ENCODE measurements at regions of chr15 and their contacts with region 1.

Region 1: GRCh38 chr15:29680465-29681165 is 141.7 kb downstream of the TJP1 start:
- DNase-seq: peak in 1 of 2 experiments; percentile 25
- H3K4me3 ChIP-seq: no peak overlapping the region
- H3K4me3 Mint-ChIP-seq: no peak overlapping the region
- H3K27ac Mint-ChIP-seq: no peak overlapping the region
- H3K4me1 ChIP-seq: no peaks in the 10 kb centered on the region
- H3K4me1 Mint-ChIP-seq: no peaks in the 10 kb centered on the region
- H3K27me3 ChIP-seq: no peaks in the 10 kb centered on the region
- H3K27me3 Mint-ChIP-seq: no peaks in the 10 kb centered on the region
- CTCF ChIP-seq: no peak

Region 2: GRCh38 chr15:29451201-29451781 is 229.3 kb before region 1 on chr15:
- CTCF ChIA-PET with region 1: no interaction called
- POLR2A ChIA-PET with region 1: no interaction called
- intact Hi-C with region 1: loop called (anchors 1 kb)
- DNase-seq: peak; percentile 52 to 54
- H3K4me3 ChIP-seq: no peak overlapping the region
- H3K4me3 Mint-ChIP-seq: no peak overlapping the region
- H3K27ac Mint-ChIP-seq: no peak overlapping the region
- H3K4me1 ChIP-seq: no peaks in the 10 kb centered on the region
- H3K4me1 Mint-ChIP-seq: no peaks in the 10 kb centered on the region
- H3K27me3 ChIP-seq: no peaks in the 10 kb centered on the region
- H3K27me3 Mint-ChIP-seq: peaks cover 7% of the 10 kb centered on the region
- CTCF ChIP-seq: peak; percentile 41 to 67

Measured in Caco-2 (cell line).